ENCODE measurements at regions of chr19 and their contacts with region 1.

Region 1: DNA sequence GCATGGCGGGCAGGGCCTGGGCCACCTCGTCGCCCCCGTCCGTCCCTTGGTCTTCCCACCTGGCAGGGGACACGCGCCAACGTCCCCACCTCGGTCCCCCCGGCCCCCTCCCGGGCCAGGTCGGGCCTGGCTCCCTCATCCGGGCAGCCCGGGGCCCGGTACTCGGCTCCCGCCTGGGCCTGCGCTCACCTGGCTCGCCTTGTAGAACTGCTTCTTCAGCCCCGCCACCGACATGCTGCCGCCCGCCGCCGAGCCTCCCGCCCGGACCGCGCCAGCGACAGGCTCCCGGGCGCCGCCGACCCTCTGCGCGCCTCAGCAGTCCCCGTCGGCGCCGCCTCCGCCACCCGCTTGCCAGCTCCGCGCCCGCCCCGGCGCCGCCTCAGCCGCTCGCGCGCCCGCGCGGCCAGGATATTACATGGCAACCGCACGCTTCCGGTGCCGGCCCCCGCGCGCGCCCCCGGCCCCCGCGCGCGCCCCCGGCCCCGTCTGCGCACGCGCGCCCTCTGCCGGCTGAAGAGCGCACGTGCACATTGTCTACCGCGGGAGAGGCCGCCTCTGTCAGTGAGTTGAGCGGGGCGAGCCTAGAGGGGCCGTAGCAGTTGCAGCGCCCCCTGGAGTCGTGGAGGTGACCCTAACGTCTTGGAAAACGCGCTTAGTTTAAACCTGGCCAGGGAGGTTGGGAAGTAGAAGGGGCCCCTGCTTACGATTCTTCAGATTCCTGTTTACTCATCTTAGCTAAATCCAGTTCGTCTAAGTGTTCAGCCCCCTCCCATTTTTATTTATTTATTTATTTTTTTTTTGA is at the start of gene SH3GL1:
- DNase-seq: peak; percentile 91 to 96 (median 93)
- ATAC-seq: peak; percentile 55 to 77 (median 66)
- H3K4me3 ChIP-seq: peak within 1 kb of the TSS; percentile 75 to 100 (median 94)
- H3K27ac ChIP-seq: peak within 1 kb of the TSS; percentile 81 to 98 (median 96)
- H3K4me1 ChIP-seq: peaks cover 4 to 70% (median 44%) of the 10 kb centered on the region in 12 donors
- H3K27me3 ChIP-seq: no peaks in the 10 kb centered on the region
- CTCF ChIP-seq: peak; percentile 83 to 98 (median 93)
- POLR2A ChIP-seq: peak in 1 of 2 donors; percentile 42
- total RNA-seq, gene SH3GL1: 14.4 to 43.6 (median 22.2) TPM

Region 2: DNA sequence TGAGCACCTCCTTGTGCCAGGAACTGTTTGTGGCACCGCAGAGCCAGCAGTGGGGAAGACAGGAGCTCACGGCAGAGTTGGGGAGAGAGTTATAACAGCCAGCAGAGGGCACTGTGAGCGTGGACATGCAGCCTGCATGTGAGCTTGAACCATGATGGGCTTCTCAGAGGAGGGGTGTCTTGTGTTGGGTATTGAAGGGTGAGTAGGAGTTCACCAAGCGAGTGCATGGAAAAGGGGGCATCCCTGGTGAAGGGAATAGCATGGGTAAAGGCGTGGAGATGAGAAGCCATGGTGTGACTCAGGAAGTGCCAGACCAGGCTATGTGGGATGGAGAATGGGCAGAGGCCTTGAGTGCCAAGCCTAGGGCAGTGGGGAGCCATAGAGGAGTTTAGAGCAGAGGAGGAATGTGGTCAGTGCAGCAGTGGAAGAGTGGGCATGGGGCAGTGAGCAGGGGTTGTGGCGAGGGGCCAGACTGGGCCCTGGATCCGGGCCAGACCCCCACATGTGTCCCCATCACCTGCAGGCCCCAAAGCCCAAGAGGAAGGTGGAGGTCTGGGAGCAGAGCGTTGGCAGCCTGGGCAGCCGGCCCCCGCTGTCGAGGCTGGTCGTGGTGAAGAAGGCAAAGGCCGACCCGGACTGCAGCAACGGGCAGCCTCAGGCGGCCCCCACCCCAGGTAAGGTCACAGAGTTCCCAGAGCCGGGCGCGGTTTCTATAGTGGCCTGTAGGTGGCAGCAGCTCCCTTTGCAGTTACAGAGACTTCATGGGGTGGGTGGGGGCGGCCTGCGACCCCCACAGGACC is 133.0 kb before region 1 on chr19:
- intact Hi-C with region 1: loop called in 3 of 10 experiments (anchors 5 to 10 kb)
- DNase-seq: peak in 3 of 5 donors; percentile 34 to 60 (median 43)
- ATAC-seq: peak in 3 of 4 donors; percentile 56 to 78 (median 72)
- H3K4me3 ChIP-seq: no peak overlapping the region
- H3K27ac ChIP-seq: no peak overlapping the region
- H3K4me1 ChIP-seq: peaks cover 0 to 7% (median 0%) of the 10 kb centered on the region in 12 donors
- H3K27me3 ChIP-seq: no peaks in the 10 kb centered on the region
- CTCF ChIP-seq: peak; percentile 75 to 92 (median 84)
- POLR2A ChIP-seq: no peak

Region 3: DNA sequence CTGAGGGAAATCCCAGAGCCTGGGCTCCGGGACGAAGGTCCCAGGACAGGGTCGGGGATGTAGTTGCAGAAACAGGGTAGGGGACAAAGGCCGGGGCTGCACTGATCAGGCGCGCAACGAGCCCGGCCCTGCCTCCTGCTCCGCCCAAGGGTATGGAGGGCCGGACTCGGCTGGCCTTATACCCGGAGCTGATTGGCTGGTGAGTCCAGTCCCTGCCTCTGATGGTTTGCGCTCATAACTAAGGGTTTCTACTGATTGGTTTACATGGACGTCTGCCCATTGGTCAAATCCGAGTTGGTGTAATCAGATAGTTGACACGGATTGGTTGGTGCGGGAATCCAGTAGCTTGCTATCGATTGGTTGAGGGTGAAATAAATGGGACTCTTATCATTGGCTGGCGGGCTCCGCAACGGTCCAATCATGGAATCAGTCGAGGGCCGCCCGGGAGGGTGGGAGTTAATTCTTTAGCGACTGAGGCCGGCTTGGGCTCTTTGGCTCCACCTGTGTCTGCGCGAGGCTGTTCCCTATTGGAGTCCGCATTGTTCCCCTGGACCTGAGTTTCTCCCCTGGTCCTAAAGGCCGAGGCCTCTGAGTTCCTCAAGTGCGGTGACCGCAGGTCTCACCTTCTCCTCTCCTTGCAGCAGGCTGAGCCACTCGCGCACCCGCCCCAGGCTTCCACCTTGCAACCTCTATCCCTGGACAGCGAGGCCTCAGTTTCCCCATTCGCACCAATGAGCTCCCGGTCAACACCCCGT is 57.5 kb before region 1 on chr19:
- intact Hi-C with region 1: loop called in 5 of 10 experiments (anchors 1 to 5 kb)
- DNase-seq: peak; percentile 96 to 99 (median 97)
- ATAC-seq: peak; percentile 94 to 98 (median 96)
- H3K4me3 ChIP-seq: peak overlapping the region; percentile 38 to 100 (median 76)
- H3K27ac ChIP-seq: peak overlapping the region; percentile 70 to 99 (median 92)
- H3K4me1 ChIP-seq: peaks cover 0 to 27% (median 15%) of the 10 kb centered on the region in 12 donors
- H3K27me3 ChIP-seq: no peaks in the 10 kb centered on the region
- CTCF ChIP-seq: peak in 7 of 12 donors; percentile 7 to 54 (median 39)
- POLR2A ChIP-seq: peak; percentile 47 to 93

Region 4: GRCh38 chr19:4375164-4376027 is 24.9 kb before region 1 on chr19:
- intact Hi-C with region 1: loop called in 2 of 10 experiments (anchors 1 to 2 kb)
- DNase-seq: peak in 2 of 5 donors; percentile 36 to 50
- ATAC-seq: peak in 2 of 4 donors; percentile 1 to 3
- H3K4me3 ChIP-seq: no peak overlapping the region
- H3K27ac ChIP-seq: peak overlapping the region; percentile 72 to 94 (median 82)
- H3K4me1 ChIP-seq: peaks cover 24 to 96% (median 82%) of the 10 kb centered on the region in 12 donors
- H3K27me3 ChIP-seq: no peaks in the 10 kb centered on the region
- CTCF ChIP-seq: peak in 2 of 12 donors; percentile 20 to 28
- POLR2A ChIP-seq: no peak